BJ (cell line): ENCODE measurements at regions of chr7 and their contacts with region 1.

Region 1: GRCh38 chr7:131488361-131488760 is 68.1 kb downstream of the PODXL start:
- DNase-seq: no peak
- H3K4me3 ChIP-seq: no peak overlapping the region
- H3K27me3 ChIP-seq: no peaks in the 10 kb centered on the region
- CTCF ChIP-seq: peak; percentile 28; the same call in 1 of the 2 replicates

Region 2: GRCh38 chr7:130632111-130632510 is 856.2 kb before region 1 on chr7:
- CTCF ChIA-PET with region 1: no interaction called
- POLR2A ChIA-PET with region 1: no interaction called
- DNase-seq: peak; percentile 6
- H3K4me3 ChIP-seq: no peak overlapping the region
- H3K27me3 ChIP-seq: no peaks in the 10 kb centered on the region
- CTCF ChIP-seq: no peak

Region 3: DNA sequence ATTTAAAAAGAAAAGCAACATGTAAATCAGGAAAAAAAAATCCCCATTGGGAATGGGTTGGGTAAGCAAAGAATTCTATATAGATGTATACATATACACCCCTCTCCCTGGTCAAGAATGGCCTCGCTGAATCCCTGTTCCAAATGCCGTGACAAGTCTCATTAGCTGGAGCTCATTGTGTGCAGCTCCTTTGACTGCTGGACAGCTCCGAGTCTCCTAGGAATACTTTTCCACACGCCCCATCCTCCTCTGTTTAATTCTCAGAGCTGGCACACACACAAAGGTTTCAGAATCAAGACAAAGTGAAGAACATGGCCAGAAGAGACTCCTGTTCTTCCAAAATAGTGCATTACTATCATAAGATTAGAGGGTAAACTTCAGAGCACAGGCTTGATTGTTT is 291.6 kb before region 1 on chr7:
- CTCF ChIA-PET with region 1: no interaction called
- POLR2A ChIA-PET with region 1: interaction called, 11 read pairs
- DNase-seq: no peak
- H3K4me3 ChIP-seq: no peak overlapping the region
- H3K27me3 ChIP-seq: no peaks in the 10 kb centered on the region
- CTCF ChIP-seq: no peak

Region 4: DNA sequence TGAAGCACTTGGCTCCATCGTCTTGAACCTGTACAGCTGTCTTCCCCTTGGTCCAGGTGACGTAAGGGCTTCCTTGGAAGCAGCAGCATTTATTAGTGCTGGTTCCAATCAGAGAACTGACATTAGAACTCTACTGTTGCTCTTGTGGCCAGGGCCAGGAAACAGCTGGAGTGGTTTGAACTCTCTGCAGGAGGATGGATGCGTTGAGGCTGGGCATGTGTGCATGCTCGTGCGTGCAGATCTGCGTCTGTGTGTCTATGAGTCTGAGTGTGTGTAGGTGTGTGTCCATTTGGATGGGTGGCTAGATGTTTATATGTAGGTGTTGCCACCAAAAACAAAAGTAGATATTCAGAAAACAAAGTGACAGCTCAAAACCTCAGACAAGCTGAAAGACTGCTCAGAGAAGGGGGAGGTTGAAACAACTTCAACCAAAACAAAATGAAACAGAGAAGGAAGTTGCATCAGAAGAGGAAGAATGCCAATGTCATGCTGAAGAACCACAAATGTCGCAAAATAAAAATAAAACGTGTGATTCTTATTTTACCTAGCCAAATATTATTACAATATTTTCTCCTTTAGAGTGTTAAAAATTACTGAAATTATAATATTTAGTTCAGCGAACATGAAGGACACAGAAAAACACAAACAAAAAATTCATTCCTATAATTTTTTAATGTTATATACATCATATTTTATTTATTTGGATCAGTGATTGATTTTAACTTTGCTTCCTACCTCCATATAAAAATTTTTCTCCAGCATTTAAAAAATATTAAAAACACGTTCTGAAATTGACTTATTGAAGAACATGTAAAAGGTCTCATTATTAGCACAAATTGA is 256.8 kb before region 1 on chr7:
- CTCF ChIA-PET with region 1: no interaction called
- POLR2A ChIA-PET with region 1: no interaction called
- DNase-seq: no peak
- H3K4me3 ChIP-seq: no peak overlapping the region
- H3K27me3 ChIP-seq: no peaks in the 10 kb centered on the region
- CTCF ChIP-seq: no peak

Region 5: DNA sequence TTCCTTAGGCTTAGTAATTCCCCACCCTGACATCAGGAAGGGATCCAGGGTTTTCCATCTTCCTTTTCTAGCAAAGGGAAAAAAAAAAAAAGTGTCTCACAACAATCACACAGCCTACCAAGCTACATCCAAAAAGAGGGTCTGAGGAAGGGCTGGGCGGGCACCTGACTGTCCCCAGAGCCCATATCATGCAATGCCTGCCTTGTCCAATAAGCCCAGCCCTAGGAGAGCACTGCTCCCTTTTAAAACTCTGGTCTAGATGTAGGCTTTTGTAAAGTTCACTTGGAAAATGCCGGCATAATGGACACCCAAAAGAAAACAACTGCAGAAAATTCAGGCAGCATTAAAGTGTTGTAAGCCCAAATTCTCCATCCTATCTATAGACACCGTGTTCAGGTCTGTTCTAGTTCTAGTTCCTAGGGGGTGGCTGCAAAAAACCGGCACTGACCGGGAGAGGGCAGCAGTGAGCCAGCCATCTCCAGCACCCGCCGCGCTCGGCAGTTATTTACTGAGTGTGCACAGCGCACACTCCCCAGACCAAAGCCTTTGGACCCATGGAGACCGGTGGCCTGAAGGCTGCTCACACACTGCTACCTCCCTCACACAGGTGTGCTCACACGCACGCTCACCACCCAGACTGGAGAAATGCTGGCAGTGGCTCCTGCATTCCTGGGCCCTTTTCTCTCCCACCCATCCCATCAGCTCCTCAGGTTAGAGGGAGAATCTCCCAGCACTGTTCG is 19.4 kb after region 1 on chr7:
- CTCF ChIA-PET with region 1: interaction called, 17 read pairs
- POLR2A ChIA-PET with region 1: no interaction called
- DNase-seq: no peak
- H3K4me3 ChIP-seq: no peak overlapping the region
- H3K27me3 ChIP-seq: no peaks in the 10 kb centered on the region
- CTCF ChIP-seq: peak; percentile 97